ENCODE measurements at regions of chr14 and their contacts with region 1.

Region 1: DNA sequence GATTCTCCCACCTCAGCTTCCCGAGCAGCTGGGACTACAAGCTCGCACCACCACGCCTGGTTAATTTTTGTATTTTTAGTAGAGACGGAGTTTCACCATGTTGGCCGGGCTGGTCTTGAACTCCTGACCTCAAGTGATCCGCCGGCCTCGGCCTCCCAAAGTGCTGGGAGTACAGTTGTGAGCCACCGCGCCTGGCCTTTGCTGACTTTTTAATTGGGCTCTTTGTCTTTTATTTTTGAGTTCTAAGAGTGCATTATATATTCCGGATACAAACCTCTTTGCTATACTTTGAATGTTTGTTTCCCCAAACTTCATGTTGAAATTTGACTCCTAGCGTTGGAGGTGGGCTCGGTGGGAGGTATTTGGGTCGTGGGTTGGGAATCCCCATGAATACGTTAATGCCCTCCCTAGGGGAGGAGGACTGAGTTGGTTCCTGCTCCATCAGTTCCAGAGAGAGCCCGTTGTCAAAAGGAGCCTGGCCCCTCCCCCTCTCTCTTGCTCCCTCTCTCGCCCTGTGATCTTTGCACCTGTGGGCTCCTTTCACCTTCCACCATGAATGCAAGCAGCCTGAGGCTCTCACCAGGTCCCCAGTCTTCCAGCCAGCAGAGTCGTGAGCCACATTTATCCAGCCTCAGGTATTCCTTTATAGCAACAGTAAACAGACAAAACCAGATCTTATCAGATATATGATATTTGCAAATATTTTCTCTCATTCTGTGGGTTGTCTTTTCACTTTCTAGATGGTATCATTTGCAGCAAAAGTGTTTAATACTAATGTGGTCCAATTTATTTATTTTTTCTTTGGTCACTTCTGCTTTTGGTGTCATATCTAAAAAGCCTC is 103.2 kb upstream of the EVL start:
- DNase-seq: no peak
- H3K4me3 ChIP-seq: no peak overlapping the region
- H3K27ac ChIP-seq: no peak overlapping the region
- H3K4me1 ChIP-seq: no peaks in the 10 kb centered on the region
- H3K27me3 ChIP-seq: peaks cover 0 to 15% (median 5%) of the 10 kb centered on the region in 5 experiments

Region 2: DNA sequence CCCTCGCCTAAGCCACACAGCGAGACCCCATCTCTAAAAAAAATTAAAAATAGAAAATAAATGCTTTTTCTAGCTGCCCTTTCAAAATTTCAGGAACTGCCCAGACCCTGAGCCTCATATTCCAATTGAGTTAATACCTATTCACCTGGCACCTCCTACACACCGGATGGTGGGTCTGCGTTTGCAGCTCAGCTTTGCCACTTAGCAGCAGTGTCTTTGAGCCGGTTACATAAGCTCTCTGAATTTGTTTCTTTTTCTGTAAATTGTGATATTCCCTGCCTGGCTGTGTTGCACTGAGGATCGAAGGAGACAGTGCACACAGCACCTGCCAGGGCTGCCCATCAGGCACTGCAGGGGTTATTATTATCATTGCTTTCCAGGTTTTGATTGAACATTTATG is 43.3 kb before region 1 on chr14:
- CTCF ChIA-PET with region 1: no interaction called
- POLR2A ChIA-PET with region 1: no interaction called
- DNase-seq: no peak
- H3K4me3 ChIP-seq: no peak overlapping the region
- H3K27ac ChIP-seq: no peak overlapping the region
- H3K4me1 ChIP-seq: no peaks in the 10 kb centered on the region
- H3K27me3 ChIP-seq: peaks cover 0 to 19% (median 11%) of the 10 kb centered on the region in 5 experiments

Region 3: GRCh38 chr14:99946652-99947489 is 15.2 kb before region 1 on chr14:
- CTCF ChIA-PET with region 1: interaction called, 11 read pairs
- POLR2A ChIA-PET with region 1: no interaction called
- DNase-seq: peak; percentile 21 to 56 (median 53)
- H3K4me3 ChIP-seq: peak overlapping the region in 6 of 7 experiments; percentile 46 to 73 (median 61)
- H3K27ac ChIP-seq: no peak overlapping the region
- H3K4me1 ChIP-seq: peaks cover 0 to 11% (median 6%) of the 10 kb centered on the region in 4 experiments
- H3K27me3 ChIP-seq: peaks cover 0 to 30% (median 9%) of the 10 kb centered on the region in 5 experiments

Region 4: DNA sequence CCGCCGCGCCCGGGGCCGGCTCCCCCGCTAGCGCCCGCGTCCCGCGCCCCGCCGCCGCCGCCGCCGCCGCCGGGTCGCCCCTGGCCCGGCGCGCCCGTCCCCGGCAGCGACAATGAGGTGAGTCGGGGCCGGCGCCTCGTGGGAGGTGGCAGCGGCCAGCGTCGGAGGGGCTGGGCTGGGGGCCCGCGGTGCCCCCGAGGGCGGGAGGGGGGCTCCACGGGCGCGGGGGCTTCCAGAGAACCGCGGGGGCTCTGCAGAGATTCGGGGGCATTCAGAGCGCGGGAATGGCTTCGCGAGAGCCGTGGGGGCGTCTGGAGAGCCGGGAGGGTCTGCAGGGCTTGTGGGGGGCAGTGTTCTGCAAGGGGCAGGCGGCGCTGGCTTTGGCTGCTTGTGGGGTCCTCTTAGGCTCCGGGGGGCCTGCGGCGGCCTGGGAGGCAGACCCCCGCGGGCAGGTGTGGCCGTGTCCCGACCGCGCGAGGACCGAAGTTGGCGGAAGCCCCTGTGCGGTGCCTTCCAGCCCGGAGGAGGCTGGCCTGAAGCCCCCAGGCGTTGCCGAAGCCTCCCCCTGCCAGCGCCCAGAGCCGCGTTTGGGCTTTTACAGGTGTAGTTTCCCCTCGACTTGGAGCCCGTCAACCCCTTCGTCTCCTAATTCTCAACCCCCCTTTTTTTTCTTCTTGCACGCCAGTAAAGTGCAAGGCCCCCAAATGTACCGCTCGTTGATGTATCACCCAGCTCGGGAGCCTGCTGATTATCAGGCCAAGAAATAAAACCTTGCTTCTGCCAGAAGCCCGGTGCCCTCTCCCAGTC is 10.1 kb after region 1 on chr14:
- CTCF ChIA-PET with region 1: no interaction called
- POLR2A ChIA-PET with region 1: no interaction called
- DNase-seq: peak in 2 of 3 donors; percentile 40 to 55
- H3K4me3 ChIP-seq: peak overlapping the region; percentile 70 to 85 (median 81)
- H3K27ac ChIP-seq: no peak overlapping the region
- H3K4me1 ChIP-seq: peaks cover 7 to 12% (median 9%) of the 10 kb centered on the region in 4 experiments
- H3K27me3 ChIP-seq: peaks cover 0 to 22% (median 8%) of the 10 kb centered on the region in 5 experiments